ENCODE measurements at regions of chr17 and their contacts with region 1.

Region 1: DNA sequence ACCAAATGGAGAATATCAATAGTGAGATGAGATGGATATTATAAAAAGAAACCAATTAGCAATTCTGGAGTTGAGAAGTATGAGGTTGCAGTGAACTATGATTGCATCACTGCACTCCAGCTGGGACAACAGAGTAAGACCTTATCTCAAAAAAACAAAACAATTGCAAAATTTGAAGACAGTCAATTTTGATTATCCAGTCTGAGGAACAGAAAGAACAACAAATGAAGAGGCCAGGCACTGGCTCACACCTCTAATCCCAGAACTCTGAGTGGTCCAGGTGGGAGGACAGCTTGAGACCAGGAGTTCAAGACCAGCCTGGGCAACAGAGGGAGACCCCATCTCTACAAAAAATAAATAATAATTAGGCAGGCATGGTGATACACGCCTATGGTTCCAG is 35.0 kb downstream of the USP32 start:
- DNase-seq: peak in 6 of 7 donors; percentile 23 to 62 (median 42)
- H3K4me3 ChIP-seq: no peak overlapping the region
- H3K27ac ChIP-seq: peak overlapping the region in 3 of 5 donors; percentile 24 to 61 (median 45)
- H3K4me1 ChIP-seq: peaks cover 34 to 58% of the 10 kb centered on the region in 2 donors
- H3K27me3 ChIP-seq: no peaks in the 10 kb centered on the region
- CTCF ChIP-seq: no peak
- POLR2A ChIP-seq: no peak

Region 2: DNA sequence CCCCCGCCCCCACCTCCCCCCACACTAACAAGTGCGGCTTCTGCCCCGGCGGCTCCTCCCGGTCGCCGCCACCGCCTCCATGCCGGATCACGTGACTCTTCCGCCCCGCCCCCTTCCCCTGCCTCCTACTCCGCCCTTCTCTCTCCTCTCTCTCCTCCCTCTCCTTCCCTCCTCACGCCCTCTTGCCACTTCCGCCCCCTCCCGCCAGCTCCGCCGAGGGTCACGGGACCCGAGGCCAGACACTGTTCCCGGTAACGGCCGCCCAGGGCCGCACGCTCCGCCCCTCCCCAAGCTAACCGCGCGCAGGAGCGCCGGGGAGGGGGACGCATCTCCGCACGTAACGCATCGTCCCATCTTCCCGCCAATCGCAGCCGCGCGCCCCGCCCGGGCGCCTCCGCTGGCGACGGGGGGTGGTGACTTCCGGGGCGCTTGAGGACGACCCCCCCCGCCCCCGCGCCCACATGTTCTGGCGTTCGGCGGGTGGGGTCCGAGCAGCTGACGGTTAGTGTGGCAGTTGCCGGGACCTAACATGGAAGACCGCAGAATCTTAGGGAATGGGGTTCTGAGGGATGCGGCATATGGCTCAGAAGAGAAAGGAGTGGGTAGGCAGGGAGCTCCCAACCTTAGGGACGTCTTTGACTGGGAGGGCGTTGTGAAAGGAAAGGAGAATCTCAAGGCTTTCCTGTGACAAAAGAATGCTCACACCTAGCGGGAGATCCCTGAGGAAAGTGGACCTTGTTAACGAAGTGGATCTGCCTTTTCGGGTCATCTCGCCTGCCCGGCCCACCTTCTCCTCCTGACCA is 35.3 kb after region 1 on chr17 and contains the start of gene USP32:
- intact Hi-C with region 1: loop called in 1 of 2 experiments (anchors 5 kb)
- DNase-seq: peak; percentile 97 to 100 (median 99)
- H3K4me3 ChIP-seq: peak within 1 kb of the TSS; percentile 72 to 86 (median 76)
- H3K27ac ChIP-seq: peak within 1 kb of the TSS; percentile 85 to 97 (median 93)
- H3K4me1 ChIP-seq: peaks cover 0 to 28% of the 10 kb centered on the region in 2 donors
- H3K27me3 ChIP-seq: no peaks in the 10 kb centered on the region
- CTCF ChIP-seq: peak in 5 of 6 experiments; percentile 10 to 41 (median 22)
- POLR2A ChIP-seq: peak; percentile 60 to 71
- total RNA-seq, gene USP32: 36.2 to 99.3 (median 58.0) TPM